PC-9 (cell line): ENCODE measurements at regions of chr6 and their contacts with region 1.

Region 1: DNA sequence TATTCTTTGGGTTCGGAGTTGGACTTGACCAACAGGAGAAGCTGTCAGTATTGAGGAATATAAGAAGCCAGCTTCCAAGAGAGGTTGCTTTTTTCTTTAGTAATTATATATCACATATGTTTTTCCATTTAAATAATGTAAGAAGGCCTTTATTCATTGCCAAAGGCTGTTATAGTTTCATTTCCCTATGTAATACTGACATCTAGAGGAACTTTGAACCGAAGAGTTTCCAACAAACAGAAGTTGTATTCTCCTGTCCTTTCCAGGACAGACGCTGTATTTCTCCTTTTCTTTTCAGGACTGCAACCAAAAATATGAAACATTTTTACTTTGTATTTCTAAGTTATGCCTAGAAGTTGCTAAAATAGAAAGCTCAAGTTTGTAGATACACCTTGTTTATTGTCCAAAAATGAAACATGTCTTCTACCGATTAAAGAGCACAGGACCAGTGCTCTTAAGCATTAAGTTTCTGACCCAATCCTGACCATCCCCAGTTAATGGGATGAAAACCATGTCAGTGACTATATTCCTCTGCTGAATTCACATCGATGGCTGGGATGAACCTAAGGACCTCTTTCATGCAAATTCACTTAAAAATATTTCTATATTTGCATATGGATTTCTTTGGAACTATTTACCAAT is 55.1 kb downstream of the MYLK4 start:
- DNase-seq: no peak
- H3K4me3 ChIP-seq: no peak overlapping the region
- H3K27ac ChIP-seq: no peak overlapping the region
- H3K4me1 ChIP-seq: no peaks in the 10 kb centered on the region
- H3K27me3 ChIP-seq: no peaks in the 10 kb centered on the region
- CTCF ChIP-seq: peak; percentile 47

Region 2: GRCh38 chr6:1596088-1596852 is 1099.3 kb before region 1 on chr6:
- CTCF ChIA-PET with region 1: interaction called, 5 read pairs
- POLR2A ChIA-PET with region 1: no interaction called
- intact Hi-C with region 1: loop called (anchors 1 kb)
- DNase-seq: peak; percentile 43 to 61
- H3K4me3 ChIP-seq: no peak overlapping the region
- H3K27ac ChIP-seq: no peak overlapping the region
- H3K4me1 ChIP-seq: no peaks in the 10 kb centered on the region
- H3K27me3 ChIP-seq: no peaks in the 10 kb centered on the region
- CTCF ChIP-seq: peak; percentile 88

Region 3: DNA sequence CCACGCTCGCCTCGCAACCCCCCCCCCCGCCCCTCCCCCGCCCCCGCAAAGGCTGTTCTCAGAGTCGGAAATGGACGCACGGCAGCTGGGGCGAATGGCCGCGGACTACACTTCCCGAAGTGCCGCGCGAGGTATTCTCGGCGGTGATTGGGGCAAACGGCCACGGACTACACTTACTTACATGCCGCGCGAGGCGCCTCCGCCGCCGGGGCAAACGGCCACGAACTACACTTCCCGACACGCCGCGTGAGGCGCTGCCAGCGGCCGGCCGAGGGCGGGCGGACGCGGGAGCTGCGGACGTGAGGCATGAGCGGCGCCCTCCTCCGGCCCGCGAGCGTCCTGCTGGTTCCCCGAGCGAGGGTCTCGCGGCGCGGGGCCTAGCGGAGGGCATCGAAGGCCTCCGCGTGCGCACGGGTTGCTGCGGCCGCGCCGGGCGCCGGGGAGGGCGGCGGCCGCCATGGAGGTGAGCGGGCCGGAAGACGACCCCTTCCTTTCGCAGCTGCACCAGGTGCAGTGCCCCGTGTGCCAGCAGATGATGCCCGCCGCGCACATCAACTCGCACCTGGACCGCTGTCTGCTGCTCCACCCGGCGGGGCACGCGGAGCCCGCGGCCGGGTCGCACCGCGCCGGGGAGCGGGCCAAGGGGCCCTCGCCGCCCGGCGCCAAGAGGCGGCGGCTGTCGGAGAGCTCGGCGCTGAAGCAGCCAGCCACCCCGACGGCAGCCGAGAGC is 69.8 kb after region 1 on chr6 and contains the start of gene WRNIP1:
- CTCF ChIA-PET with region 1: no interaction called
- POLR2A ChIA-PET with region 1: no interaction called
- intact Hi-C with region 1: no loop called
- DNase-seq: peak; percentile 93 to 98
- H3K4me3 ChIP-seq: peak within 1 kb of the TSS; percentile 83
- H3K27ac ChIP-seq: peak within 1 kb of the TSS; percentile 63
- H3K4me1 ChIP-seq: peaks cover 13% of the 10 kb centered on the region
- H3K27me3 ChIP-seq: no peaks in the 10 kb centered on the region
- CTCF ChIP-seq: no peak; the same call in 1 of the 2 replicates
- total RNA-seq, gene WRNIP1: 61.4 and 69.5 TPM in 2 replicates

Region 4: DNA sequence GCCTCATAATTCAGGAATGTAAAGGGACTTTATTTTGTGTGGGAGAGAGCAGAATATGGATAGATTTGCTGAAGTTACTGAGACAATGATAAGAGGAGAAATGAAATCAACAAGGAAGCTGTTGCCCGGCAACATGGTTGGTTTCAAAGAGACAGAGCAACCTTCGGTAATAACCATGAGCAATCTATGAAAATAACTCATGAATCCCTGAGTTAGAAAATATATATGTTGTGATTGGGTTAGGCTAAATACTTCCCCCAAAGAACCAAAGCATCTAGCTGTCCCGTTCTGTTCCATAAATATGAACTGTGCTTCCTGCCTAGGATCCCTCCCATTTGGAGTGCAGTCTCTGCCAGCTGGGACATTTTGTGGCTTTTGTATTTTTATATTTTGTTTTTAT is 123.0 kb after region 1 on chr6:
- CTCF ChIA-PET with region 1: no interaction called
- POLR2A ChIA-PET with region 1: no interaction called
- intact Hi-C with region 1: no loop called
- DNase-seq: peak in 1 of 2 experiments; percentile 67
- H3K4me3 ChIP-seq: peak overlapping the region; percentile 34; the same call in 1 of the 2 replicates
- H3K27ac ChIP-seq: peak overlapping the region; percentile 98
- H3K4me1 ChIP-seq: peaks cover 40% of the 10 kb centered on the region
- H3K27me3 ChIP-seq: no peaks in the 10 kb centered on the region
- CTCF ChIP-seq: no peak